Esophagus muscularis mucosa (tissue), 4 donors: ENCODE measurements at regions of chr10 and their contacts with region 1.

Region 1: DNA sequence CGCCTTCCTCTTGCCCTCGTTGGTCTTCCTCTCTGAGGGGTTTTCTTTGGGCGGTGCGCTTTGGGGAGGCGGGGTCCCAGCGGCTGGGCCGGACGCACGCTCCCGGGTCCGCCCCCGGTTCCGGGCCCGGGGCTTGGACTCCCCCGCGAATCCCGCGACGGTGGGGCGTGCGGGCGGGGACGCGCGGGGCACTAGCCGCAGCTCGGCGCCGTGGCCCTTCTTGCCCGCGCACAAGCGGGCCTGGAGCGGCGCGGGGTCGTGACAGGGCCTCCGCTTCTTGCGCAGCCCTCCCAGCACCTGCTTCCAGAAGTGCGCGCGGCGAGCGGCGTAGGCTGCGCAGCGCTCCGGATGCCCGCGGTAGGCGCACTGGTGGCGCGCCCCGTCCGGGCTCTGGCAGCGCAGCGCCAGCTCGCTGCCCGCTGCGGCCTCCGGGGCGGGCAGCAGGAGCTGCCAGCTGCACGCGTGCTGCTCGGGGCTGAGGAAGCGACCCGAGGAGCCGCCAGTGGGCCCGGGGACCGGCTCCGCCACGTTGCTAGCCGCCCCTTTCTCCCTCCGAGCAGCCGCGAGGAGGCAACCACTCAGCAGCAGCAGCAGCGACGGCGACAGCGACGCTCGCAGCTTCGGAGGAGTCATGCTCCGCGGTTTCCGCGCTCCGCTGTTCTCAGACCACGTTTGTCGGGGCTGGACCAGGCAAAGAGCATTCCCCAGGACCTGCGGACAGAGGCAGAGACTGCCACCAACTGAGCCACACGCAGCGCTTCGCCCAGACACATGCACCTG is 759 bp downstream of the FGFBP3 start:
- DNase-seq: no peak
- H3K4me3 ChIP-seq: peak overlapping the region; percentile 66 to 86 (median 79)
- H3K27ac ChIP-seq: peak overlapping the region; percentile 61 to 76 (median 66)
- H3K4me1 ChIP-seq: peaks cover 0 to 26% (median 23%) of the 10 kb centered on the region in 4 donors
- H3K27me3 ChIP-seq: no peaks in the 10 kb centered on the region
- CTCF ChIP-seq: peak; percentile 11 to 44 (median 28)
- EP300 ChIP-seq: no peak
- POLR2A ChIP-seq: no peak

Region 2: DNA sequence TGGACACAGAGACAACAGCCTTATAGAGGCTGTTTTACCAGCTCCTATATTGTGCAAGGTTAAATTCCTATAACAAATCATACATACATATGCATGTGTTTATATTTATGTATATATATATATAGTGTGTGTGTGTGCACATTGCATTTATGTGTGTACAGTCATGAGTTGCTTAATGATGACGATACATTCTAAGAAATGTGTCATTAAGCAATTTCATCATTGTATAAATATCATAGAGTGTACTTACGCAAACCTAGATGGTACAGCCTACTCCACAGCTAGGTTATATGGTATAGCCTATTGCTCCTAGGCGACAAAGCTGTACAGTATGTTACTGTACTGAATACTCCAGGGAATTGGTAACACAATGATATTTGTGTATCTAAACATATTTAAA is 140.4 kb before region 1 on chr10:
- intact Hi-C with region 1: loop called (anchors 10 kb)
- DNase-seq: no peak
- H3K4me3 ChIP-seq: no peak overlapping the region
- H3K27ac ChIP-seq: no peak overlapping the region
- H3K4me1 ChIP-seq: no peaks in the 10 kb centered on the region
- H3K27me3 ChIP-seq: no peaks in the 10 kb centered on the region
- CTCF ChIP-seq: no peak
- EP300 ChIP-seq: no peak
- POLR2A ChIP-seq: no peak